ENCODE measurements at regions of chr9 and their contacts with region 1.

Region 1: GRCh38 chr9:95004411-95005277 is 278.1 kb downstream of the AOPEP start:
- DNase-seq: peak; percentile 83

Region 2: DNA sequence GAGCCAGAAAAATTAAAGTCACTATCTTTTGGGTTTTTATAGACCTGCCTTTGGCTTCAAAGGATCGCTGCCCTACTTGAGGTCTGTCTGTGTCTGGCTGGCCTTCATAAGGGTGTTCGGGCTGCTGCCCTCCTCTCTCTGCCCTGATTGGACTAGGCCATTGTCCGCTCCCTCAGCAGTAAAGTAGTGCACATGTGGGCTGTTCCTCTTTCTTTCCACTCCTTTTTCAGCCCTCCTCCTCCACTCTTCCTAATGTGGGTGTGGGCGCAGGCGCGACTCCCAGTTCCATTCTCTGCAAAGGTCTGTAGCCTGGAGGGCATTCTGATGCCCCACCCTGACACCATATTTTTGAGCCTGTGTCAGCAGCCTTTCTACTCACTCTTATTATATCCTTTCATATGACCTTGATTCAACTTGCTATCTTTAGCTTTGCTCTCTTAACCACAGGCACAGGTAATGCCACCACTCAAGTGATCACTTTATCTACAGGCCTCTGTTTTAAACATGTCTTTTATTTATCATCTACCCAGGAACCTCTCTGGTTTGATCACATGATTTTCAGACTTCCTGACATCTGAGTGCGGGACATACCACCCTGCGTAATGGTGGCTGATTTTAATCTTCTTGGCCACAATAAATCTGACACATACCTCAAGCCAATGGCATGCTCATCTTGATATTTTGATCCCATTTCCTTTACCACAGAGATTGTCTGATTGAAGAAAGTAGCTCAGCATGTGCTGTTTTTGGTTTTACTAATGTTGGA is 133.7 kb before region 1 on chr9:
- intact Hi-C with region 1: loop called (anchors 2 kb)
- DNase-seq: peak; percentile 87

Region 3: DNA sequence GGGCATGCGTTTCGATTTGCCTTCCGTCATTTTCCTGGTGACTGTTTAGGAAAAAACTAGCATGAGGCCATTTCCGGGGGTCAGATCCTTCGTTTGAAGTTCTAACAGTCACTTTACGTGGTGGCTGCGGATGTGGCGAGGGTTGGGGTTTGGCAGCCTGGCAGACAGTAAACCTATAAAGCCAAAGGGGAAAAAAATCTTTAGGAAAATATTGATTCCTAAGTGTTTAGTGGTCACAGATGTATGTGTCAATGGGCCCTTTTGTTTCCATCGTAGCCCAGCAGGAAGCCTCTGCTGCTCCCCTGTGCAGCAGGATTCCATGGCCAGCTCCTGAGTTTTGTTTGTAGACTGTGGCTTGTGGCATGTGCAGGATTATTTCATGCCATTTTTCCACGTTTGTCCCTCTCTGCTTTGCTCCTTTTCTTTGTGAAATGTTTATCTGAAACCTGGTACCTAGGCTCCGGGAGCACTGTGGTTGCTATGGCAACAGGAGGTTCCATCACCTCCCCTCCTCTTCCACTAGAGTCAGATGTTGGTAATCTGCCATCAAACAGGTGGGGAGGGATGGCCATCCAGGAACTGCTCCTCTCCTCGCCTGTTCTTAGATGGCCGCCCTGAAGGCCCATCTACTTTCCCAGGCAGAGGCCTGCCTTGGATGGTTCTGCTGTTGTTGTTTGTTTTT is 75.8 kb before region 1 on chr9:
- intact Hi-C with region 1: loop called (anchors 5 kb)
- DNase-seq: no peak

Region 4: GRCh38 chr9:94952565-94953373 is 51.9 kb before region 1 on chr9:
- intact Hi-C with region 1: loop called (anchors 2 kb)
- DNase-seq: no peak

Region 5: GRCh38 chr9:95048225-95049087 is 43.8 kb after region 1 on chr9:
- intact Hi-C with region 1: loop called (anchors 5 kb)
- DNase-seq: peak; percentile 93

Region 6: GRCh38 chr9:95127249-95128176 is 122.9 kb after region 1 on chr9:
- intact Hi-C with region 1: loop called (anchors 5 kb)
- DNase-seq: peak; percentile 91